CD14-positive monocyte (primary cell): ENCODE measurements at regions of chr22 and their contacts with region 1.

Region 1: GRCh38 chr22:20965104-20965887 is 1.8 kb upstream of the AIFM3 start:
- DNase-seq: no peak
- H3K4me3 ChIP-seq: peak overlapping the region; percentile 16 to 69 (median 24)
- H3K4me3 Mint-ChIP-seq: peak overlapping the region; percentile 71 to 80
- H3K27ac ChIP-seq: no peak overlapping the region
- H3K27ac Mint-ChIP-seq: no peak overlapping the region
- H3K4me1 ChIP-seq: peaks cover 57 to 68% of the 10 kb centered on the region in 2 donors
- H3K4me1 Mint-ChIP-seq: peaks cover 59% of the 10 kb centered on the region
- H3K27me3 ChIP-seq: peaks cover 3 to 16% of the 10 kb centered on the region in 2 donors
- H3K27me3 Mint-ChIP-seq: peaks cover 18 to 29% (median 26%) of the 10 kb centered on the region in 3 donors
- CTCF ChIP-seq: no peak

Region 2: DNA sequence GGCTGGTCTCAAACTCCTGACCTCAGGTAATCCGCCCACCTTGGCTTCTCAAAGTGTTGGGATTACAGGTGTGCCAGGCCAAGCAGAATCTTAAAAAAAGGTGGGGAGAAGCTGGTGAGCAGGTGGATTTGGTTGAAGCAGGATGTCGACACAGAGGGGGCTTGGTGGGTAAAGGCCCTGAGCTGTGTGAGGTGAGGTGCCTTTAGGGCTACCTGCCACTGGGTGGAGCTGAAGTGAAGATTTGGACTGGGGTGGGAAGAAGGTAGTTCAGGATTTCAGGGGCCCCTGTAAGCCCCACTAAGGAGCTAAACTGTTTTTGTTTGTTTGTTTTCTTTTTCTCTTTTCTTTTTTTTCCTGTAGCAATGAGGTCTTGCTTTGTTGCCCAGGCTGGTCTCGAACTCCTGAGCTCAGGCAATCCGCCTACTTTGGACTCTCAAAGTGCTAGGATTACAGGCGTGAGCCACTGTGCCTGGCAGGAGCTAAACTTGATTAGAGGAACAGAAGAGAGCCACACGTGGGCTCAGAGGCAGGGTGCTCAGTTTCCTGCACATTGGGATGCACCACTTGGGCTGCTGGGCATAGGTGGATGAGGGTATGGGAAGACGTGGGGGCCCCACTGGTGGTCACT is 55.6 kb after region 1 on chr22:
- intact Hi-C with region 1: loop called in 1 of 2 experiments (anchors 10 kb)
- DNase-seq: no peak
- H3K4me3 ChIP-seq: no peak overlapping the region
- H3K4me3 Mint-ChIP-seq: no peak overlapping the region
- H3K27ac ChIP-seq: no peak overlapping the region
- H3K27ac Mint-ChIP-seq: no peak overlapping the region
- H3K4me1 ChIP-seq: no peaks in the 10 kb centered on the region
- H3K4me1 Mint-ChIP-seq: no peaks in the 10 kb centered on the region
- H3K27me3 ChIP-seq: no peaks in the 10 kb centered on the region
- H3K27me3 Mint-ChIP-seq: peaks cover 5 to 19% (median 10%) of the 10 kb centered on the region in 3 donors
- CTCF ChIP-seq: peak; percentile 32